ENCODE measurements at regions of chr15 and their contacts with region 1.

Region 1: GRCh38 chr15:28935326-28935725 is 49.6 kb downstream of the APBA2 start:
- DNase-seq: peak; percentile 81
- ATAC-seq: peak; percentile 83
- H3K4me3 Mint-ChIP-seq: no peak overlapping the region
- H3K27ac Mint-ChIP-seq: no peak overlapping the region
- H3K4me1 Mint-ChIP-seq: peaks cover 23% of the 10 kb centered on the region
- H3K27me3 Mint-ChIP-seq: no peaks in the 10 kb centered on the region
- CTCF ChIP-seq: no peak; the same call in 1 of the 2 replicates

Region 2: DNA sequence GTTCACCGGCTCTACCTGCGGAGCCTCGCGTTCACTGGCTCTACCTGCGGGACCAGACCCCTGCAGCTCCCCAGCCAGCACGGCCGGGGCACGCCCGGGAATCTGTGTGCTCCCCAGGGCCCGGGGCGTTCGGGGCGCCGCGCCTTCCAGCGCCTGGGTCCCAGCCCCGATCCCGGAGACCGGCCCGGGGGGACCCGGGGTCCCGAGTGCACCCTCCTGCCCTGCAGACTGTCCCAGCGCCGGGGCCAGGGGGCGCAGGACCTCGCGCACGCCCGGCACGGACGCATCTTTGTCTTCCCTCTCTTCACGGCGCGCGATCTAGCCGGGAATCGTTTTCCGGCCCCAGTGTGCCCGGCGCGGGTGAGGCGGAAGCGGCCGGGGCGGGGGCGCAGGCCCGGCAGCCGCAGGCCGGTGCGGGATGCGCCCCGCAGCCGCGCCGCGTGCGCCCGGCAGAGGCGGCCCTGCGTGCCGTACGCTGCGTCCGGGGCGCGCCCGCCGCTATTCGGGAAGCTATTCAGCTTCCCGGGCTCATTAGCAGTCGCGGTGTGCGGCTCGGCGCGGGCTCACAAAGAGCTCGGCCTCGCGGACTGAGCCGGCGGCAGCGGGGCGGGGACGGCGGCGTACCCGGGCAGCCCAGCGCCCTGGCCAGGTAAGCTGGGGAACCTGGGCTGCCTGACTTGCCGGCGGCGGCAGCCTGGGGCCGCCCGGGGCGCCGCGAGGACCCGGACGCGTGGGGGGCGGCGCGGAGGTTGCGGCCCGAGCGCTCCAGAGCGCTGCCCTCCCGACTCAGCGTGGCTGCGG is 49.5 kb before region 1 on chr15 and contains the start of gene APBA2:
- CTCF ChIA-PET with region 1: no interaction called
- POLR2A ChIA-PET with region 1: no interaction called
- DNase-seq: peak; percentile 57
- ATAC-seq: peak; percentile 59
- H3K4me3 Mint-ChIP-seq: peak within 1 kb of the TSS; percentile 66
- H3K27ac Mint-ChIP-seq: no peak within 1 kb of the TSS
- H3K4me1 Mint-ChIP-seq: peaks cover 9% of the 10 kb centered on the region
- H3K27me3 Mint-ChIP-seq: peaks cover 33% of the 10 kb centered on the region
- CTCF ChIP-seq: no peak
- total RNA-seq, gene APBA2: 11.2 to 14.6 TPM (median 13.9 TPM) in 3 replicates

Region 3: DNA sequence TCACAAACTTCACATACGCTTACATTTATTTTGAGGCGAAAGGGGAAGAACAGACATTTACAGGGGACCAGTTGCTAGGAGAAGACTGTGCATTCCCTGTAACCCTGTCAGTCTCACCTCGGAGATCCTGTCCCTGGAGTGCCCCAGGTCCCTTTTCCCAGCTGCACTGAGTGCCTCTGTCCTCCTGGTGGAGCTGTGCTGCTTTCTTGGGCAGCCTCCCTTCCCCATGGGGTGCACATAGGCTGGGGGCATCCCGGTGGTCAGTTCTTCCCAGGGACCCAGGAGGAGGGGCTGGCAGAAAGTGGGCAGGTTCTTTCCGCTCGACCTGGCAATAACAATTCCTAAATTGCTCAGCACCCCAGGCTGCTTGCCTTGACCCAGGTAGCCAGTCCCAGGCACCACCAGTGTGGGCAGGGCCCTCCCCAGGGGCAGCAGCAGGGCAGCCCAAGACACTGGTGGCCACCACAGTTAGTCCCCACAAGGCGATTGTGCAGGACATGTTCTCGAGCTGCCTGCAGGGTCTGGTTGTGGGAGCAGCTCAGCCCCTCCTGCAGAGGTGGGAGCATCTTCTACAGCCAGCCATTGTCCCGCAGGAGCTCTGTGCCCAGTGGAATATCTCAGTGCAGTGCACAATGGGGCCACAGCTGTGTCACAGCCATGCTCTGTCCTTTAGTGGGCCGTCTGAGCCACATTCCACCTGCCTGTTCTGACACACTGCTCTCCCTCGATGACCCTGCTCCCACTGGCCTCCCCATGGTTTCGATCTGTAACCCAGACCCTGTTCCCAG is 13.2 kb before region 1 on chr15:
- CTCF ChIA-PET with region 1: interaction called, 15 read pairs
- POLR2A ChIA-PET with region 1: no interaction called
- DNase-seq: peak; percentile 71
- ATAC-seq: peak; percentile 65
- H3K4me3 Mint-ChIP-seq: no peak overlapping the region
- H3K27ac Mint-ChIP-seq: no peak overlapping the region; the same call in 1 of the 2 replicates
- H3K4me1 Mint-ChIP-seq: peaks cover 12% of the 10 kb centered on the region
- H3K27me3 Mint-ChIP-seq: no peaks in the 10 kb centered on the region
- CTCF ChIP-seq: peak; percentile 20; the same call in 1 of the 2 replicates